ENCODE measurements at regions of chr22 and their contacts with region 1.

Region 1: GRCh38 chr22:39532215-39533071 is at the start of gene RPS19BP1:
- DNase-seq: peak; percentile 100
- H3K4me3 ChIP-seq: peak within 1 kb of the TSS; percentile 65 to 85 (median 80)
- H3K27ac ChIP-seq: peak within 1 kb of the TSS; percentile 52
- H3K4me1 ChIP-seq: peaks cover 41% of the 10 kb centered on the region
- H3K27me3 ChIP-seq: no peaks in the 10 kb centered on the region
- CTCF ChIP-seq: no peak
- total RNA-seq, gene RPS19BP1: 35.7 to 81.3 TPM

Region 2: GRCh38 chr22:39319270-39320022 is 213.0 kb before region 1 on chr22 and contains the start of gene RPL3:
- CTCF ChIA-PET with region 1: interaction called, 5 read pairs
- dilution Hi-C with region 1: no loop called
- in situ Hi-C with region 1: no loop called
- intact Hi-C with region 1: loop called (anchors 2 kb)
- DNase-seq: peak; percentile 96
- H3K4me3 ChIP-seq: peak within 1 kb of the TSS; percentile 74 to 97 (median 87)
- H3K27ac ChIP-seq: peak within 1 kb of the TSS; percentile 92
- H3K4me1 ChIP-seq: peaks cover 20% of the 10 kb centered on the region
- H3K27me3 ChIP-seq: no peaks in the 10 kb centered on the region
- CTCF ChIP-seq: no peak
- total RNA-seq, gene RPL3: 1,970 to 2,165 TPM

Region 3: DNA sequence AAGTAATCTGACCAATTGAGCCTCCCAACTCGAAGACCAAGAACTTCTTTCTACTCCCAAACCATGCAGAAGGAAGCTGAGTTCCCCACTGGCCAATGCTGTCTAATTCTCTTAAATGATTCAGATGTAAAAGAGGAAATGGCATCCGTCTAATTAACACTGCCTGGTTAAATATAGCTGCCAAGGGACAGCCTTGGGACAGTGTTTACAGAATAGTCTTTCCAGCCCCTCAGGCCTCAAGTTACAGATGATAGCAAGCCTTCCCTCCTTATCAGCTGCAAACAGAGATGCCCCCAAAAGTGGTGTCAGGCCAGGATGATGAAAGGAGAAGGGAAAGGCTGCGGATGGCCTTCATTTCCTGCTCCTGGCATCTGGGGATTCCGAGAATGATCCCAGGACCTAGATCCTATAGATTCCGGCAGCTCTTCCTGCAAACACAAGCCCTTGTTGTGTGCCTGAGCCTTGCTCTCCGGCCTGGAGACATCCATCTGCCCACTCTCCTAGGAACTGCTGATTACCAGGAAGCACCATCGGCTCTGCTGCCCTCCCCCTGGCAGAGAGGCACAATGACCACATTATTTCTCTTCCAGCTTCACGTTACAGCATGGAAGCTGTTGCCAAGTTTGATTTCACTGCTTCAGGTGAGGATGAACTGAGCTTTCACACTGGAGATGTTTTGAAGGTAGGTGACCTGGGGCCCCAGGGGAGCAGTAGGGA is 414.2 kb after region 1 on chr22:
- CTCF ChIA-PET with region 1: no interaction called
- dilution Hi-C with region 1: no loop called
- in situ Hi-C with region 1: no loop called
- intact Hi-C with region 1: loop called (anchors 10 kb)
- DNase-seq: peak; percentile 46
- H3K4me3 ChIP-seq: no peak overlapping the region
- H3K27ac ChIP-seq: no peak overlapping the region
- H3K4me1 ChIP-seq: peaks cover 13% of the 10 kb centered on the region
- H3K27me3 ChIP-seq: no peaks in the 10 kb centered on the region
- CTCF ChIP-seq: no peak

Region 4: GRCh38 chr22:40044102-40044869 is 511.8 kb after region 1 on chr22:
- CTCF ChIA-PET with region 1: no interaction called
- dilution Hi-C with region 1: no loop called
- in situ Hi-C with region 1: no loop called
- intact Hi-C with region 1: loop called (anchors 2 kb)
- DNase-seq: peak; percentile 99
- H3K4me3 ChIP-seq: peak overlapping the region; percentile 78 to 97 (median 90)
- H3K27ac ChIP-seq: peak overlapping the region; percentile 80
- H3K4me1 ChIP-seq: peaks cover 44% of the 10 kb centered on the region
- H3K27me3 ChIP-seq: no peaks in the 10 kb centered on the region
- CTCF ChIP-seq: no peak

Region 5: DNA sequence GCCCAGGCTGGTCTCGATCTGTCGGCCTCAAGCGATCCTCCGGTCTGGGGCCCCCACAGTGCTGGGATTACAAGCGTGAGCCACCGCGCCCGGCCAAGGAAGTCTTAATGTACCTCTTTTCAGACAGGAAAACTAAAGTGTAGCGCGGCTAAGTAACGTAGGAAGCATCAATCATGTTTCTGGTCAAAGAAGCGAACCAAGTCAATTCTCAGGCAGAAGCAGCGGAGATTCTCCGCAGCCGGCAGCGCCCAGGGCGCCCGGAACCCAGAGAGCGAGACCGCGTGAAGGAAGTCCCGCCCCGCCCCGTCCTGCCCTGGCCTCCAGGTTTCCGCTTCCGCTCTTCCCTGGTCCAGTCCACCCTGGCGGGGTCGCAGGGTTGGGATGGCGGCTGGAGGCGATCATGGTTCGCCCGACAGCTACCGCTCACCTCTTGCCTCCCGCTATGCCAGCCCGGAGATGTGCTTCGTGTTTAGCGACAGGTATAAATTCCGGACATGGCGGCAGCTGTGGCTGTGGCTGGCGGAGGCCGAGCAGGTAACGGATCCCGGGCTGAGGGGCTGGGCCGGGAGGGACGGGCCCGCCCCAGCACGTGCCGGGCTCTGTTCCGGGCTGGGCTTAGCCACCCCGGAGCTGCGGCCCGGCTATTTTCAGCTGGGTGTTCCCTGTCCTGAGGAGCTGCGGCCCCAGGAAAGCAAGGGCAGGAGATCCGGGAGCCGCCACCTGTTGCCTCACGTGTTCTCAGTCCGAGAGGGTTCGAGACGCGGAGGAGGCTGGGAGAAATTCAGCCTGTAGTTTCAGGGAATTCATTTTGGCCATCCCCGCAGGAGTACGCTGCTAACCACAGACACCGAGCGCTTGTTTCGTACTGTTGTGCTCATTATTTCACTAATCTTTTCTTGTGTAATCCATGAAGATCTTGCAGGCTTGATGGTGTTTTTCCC is 814.0 kb after region 1 on chr22 and contains the start of gene ADSL:
- CTCF ChIA-PET with region 1: no interaction called
- dilution Hi-C with region 1: no loop called
- in situ Hi-C with region 1: loop called in 1 of 2 experiments (anchors 10 kb)
- intact Hi-C with region 1: loop called (anchors 1 kb)
- DNase-seq: peak; percentile 88
- H3K4me3 ChIP-seq: peak within 1 kb of the TSS; percentile 77 to 84 (median 83)
- H3K27ac ChIP-seq: peak within 1 kb of the TSS; percentile 59
- H3K4me1 ChIP-seq: peaks cover 13% of the 10 kb centered on the region
- H3K27me3 ChIP-seq: no peaks in the 10 kb centered on the region
- CTCF ChIP-seq: peak in 1 of 2 donors; percentile 14
- total RNA-seq, gene ADSL: 67.5 to 78.0 TPM